Colonic mucosa (tissue), 4 donors: ENCODE measurements at regions of chr3 and their contacts with region 1.

Region 1: GRCh38 chr3:129824926-129825541 is 68.5 kb downstream of the TMCC1 start:
- DNase-seq: peak; percentile 62
- H3K4me3 ChIP-seq: no peak overlapping the region
- H3K27ac ChIP-seq: no peak overlapping the region
- H3K4me1 ChIP-seq: no peaks in the 10 kb centered on the region
- H3K27me3 ChIP-seq: no peaks in the 10 kb centered on the region
- CTCF ChIP-seq: peak; percentile 62

Region 2: DNA sequence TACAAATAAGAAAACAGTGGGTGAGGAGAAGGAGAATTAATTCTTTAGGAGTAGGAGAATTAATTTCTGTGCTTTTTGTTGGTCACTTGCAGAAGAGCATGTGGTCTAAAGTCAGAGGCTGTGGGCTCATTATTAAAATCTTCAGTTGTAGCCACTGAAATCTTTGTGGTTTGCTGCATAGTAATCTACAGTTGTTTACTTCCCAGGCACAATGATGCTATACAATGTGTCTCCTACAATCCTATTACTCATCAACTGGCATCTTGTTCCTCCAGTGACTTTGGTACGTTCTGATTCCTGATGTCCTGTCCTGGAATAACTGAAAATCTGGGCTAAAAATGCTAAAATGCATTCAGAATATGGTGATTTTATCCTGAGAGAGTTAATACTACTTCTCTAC is 364.0 kb before region 1 on chr3:
- intact Hi-C with region 1: no loop called
- DNase-seq: no peak
- H3K4me3 ChIP-seq: no peak overlapping the region
- H3K27ac ChIP-seq: no peak overlapping the region
- H3K4me1 ChIP-seq: no peaks in the 10 kb centered on the region
- H3K27me3 ChIP-seq: no peaks in the 10 kb centered on the region
- CTCF ChIP-seq: no peak

Region 3: DNA sequence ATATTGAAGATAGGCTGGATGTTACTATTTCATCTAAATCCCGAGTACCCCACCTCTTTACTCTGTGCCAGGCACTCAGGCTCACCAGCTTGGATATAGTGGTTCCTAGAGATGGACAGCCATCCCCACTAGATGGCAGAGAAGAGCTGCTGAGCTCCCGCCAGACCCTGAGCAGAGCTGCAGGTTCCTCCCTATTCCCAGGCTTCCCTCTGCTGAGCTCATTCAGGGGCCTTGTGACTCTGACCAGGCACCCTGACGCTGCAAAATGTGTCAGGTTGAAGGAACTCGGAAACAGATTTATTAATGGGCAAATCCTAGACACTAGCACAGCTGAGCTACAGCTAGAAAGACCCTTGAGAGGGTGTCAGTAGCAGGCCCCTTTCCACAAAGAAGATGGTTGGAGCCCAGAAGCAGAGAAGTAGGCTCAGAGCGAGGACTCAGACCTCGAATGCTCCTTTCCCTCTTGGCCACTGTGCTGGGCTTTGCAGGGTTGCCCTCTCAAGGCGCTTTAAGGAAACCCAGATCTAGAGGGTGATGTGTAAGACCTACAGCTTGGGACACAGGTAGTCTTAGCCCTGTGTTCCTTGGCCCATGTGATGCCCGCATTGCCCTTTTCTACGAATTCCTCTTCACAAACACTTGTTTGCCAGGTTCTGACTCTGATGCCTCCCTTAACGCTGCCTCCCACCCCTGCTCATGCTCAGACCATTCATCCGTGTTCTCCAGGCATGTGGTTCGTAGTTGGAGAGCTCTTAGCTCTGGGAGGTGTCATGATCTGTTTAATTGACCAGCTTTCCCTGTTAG is 334.6 kb before region 1 on chr3:
- intact Hi-C with region 1: loop called (anchors 5 kb)
- DNase-seq: peak; percentile 77
- H3K4me3 ChIP-seq: no peak overlapping the region
- H3K27ac ChIP-seq: no peak overlapping the region
- H3K4me1 ChIP-seq: no peaks in the 10 kb centered on the region
- H3K27me3 ChIP-seq: no peaks in the 10 kb centered on the region
- CTCF ChIP-seq: peak; percentile 72

Region 4: DNA sequence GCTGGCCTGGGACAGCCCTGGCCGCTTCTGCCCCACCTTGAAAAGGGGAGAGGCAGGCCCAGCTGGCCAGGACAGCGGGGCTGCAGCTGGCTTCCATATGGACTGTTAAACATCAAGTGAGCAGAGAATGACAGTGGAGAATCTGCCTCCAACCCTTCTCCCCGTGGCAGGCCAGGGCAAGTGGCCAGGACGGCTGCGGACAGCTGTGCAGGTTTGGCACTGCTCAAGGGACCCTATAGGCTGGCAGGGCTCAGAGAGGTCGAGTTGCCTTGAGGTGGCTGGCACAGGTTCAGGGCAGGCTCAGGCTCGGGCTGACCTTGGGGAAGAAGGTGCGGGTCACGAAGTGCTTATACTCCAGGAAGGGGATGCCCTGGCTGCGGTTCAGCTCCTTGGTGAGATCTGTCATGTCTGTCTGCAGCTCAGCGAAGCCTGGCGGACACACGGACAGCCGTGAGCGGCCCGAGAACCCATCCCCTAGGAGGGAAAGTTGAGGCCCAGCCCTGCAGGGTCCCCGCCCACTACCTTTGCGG is 257.8 kb before region 1 on chr3:
- intact Hi-C with region 1: no loop called
- DNase-seq: no peak
- H3K4me3 ChIP-seq: no peak overlapping the region
- H3K27ac ChIP-seq: no peak overlapping the region
- H3K4me1 ChIP-seq: no peaks in the 10 kb centered on the region
- H3K27me3 ChIP-seq: no peaks in the 10 kb centered on the region
- CTCF ChIP-seq: no peak

Region 5: GRCh38 chr3:129627429-129628168 is 197.4 kb before region 1 on chr3:
- intact Hi-C with region 1: loop called (anchors 5 kb)
- DNase-seq: peak; percentile 76
- H3K4me3 ChIP-seq: peak overlapping the region; percentile 50
- H3K27ac ChIP-seq: peak overlapping the region; percentile 99
- H3K4me1 ChIP-seq: peaks cover 20% of the 10 kb centered on the region
- H3K27me3 ChIP-seq: no peaks in the 10 kb centered on the region
- CTCF ChIP-seq: peak; percentile 64

Region 6: GRCh38 chr3:129650256-129650872 is 174.7 kb before region 1 on chr3:
- intact Hi-C with region 1: loop called (anchors 5 kb)
- DNase-seq: peak; percentile 72
- H3K4me3 ChIP-seq: no peak overlapping the region
- H3K27ac ChIP-seq: no peak overlapping the region
- H3K4me1 ChIP-seq: no peaks in the 10 kb centered on the region
- H3K27me3 ChIP-seq: no peaks in the 10 kb centered on the region
- CTCF ChIP-seq: peak; percentile 40